Activated CD4-positive, alpha-beta memory T cell treated with anti-CD3 and anti-CD28 coated beads for 36 hours (primary cell): ENCODE measurements at regions of chr22 and their contacts with region 1.

Region 1: DNA sequence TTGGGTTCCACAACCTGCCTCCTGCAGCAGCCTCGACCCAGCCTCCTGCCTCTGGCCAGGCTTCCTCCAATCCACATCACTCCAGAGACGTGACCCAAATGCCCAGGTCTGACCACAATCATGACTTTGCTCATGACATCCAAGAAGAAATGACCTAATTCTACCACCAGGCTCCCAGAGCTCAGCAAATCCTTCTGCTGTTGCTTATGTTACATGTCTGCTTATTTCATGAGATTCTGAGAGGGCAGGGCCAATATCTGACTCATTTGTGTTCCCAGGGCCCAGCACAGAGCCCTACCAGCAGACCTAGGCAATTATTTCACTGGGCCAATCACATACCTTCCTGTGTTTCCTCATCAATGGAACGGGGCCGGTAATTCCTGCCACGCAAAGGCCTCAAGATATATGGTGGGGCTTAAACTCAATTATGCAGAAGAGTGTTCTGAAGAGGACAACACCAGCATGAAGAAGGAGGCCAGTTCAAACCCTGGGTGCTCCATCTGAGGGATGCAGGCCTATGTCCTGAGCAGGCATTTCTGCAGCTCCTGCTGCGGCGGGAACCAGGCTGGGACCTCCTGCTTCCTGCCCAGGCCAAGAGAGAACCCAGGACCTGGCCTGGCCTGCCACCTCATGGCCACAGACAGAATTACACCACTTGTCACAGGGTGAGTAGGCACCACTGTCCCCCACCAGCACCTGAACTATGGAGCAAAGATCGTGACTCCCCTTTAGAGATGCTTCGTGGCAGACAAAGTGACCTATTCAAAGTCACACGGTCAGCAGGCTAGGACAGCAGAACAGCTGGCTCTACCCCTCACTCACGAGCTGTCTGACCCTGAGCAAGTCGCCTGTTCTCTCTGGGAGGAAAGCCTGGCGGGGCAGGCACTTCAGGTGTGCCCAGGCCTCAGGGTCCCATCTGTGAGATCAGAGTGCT is 5.9 kb downstream of the CENPM start:
- DNase-seq: peak; percentile 91
- H3K4me3 Mint-ChIP-seq: peak overlapping the region; percentile 80
- H3K27ac Mint-ChIP-seq: peak overlapping the region; percentile 99
- H3K4me1 Mint-ChIP-seq: peaks cover 67% of the 10 kb centered on the region
- H3K27me3 Mint-ChIP-seq: no peaks in the 10 kb centered on the region

Region 2: DNA sequence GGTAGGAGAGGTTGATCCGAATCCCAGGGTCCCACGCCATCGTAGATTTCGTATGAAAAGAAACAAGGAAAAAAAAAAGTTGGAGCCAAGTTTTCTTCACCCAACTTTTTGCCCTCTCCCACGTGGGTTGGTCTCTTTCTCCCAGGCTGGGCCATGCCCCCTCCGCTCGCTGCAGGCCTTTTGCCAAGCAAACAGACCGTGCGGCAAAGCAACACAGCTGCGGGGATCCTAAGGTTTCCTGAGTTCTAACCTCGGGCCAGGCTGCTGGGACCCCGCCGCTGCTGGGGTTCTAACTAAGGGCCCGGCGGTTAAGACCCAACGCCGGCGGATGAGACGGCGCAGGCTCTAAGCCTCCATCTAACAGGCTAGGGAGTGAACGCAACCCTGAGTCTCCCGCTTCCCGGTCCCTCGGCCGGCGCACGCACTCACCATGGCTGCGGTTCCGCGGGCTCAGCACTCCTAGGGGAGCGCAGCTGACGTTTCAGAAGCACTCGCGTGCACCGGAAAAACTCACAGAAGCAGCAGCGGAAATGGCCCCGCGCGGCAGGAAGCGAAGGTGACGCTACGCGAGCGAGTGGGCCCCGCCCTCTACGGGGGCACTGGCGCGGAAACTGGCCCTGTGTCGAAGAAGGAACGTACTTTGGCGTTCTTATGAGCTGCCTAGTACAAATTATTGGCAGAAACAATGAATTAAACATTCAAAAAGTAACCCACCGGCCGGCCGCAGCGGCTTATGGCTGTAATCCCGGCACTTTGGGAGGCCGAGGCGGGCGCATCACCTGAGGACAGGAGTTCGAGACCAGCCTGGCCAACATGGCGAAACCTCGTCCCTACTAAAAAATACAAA is 252.5 kb before region 1 on chr22 and contains the start of gene SNU13:
- CTCF ChIA-PET with region 1: no interaction called
- POLR2A ChIA-PET with region 1: interaction called, 15 read pairs
- intact Hi-C with region 1: no loop called
- DNase-seq: peak; percentile 96
- H3K4me3 Mint-ChIP-seq: peak within 1 kb of the TSS; percentile 99
- H3K27ac Mint-ChIP-seq: peak within 1 kb of the TSS; percentile 97
- H3K4me1 Mint-ChIP-seq: peaks cover 34% of the 10 kb centered on the region
- H3K27me3 Mint-ChIP-seq: no peaks in the 10 kb centered on the region
- total RNA-seq, gene SNU13: 236 to 242 TPM

Region 3: DNA sequence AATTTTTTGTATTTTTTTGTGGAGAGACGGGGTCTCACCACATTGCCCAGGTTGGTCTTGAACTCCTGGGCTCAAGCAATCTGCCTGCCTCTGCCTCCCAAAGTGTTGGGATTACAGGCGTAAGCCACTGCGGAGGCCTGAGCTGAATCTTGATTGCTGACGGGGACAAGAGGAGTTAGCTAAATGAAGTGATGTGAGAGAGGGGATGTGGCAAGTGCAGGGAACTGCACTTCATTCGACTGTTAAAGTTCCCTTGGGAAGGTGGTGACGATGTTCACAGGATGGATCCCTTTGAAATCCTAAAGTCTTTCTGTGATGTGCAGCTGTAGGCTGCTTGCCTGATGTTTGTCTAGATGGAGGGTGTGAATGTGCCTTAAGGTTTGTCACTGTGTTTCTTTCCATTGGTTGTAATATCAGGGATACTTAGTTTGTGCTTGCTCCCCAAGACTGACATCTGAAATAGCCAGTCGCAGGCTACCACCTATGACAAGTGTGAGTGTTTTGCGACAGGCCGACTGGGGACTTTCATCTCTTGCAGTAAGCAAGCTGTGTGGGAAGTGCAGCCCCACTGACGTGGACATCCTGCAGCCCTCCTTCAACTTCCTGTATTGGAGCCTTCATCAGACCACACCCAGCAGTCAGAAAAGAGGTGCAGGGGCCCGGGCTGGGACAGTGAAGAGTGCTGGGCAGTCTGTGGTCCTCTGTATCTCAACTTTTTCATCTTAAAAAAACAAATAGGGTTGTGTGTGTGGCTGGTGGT is 160.2 kb before region 1 on chr22:
- CTCF ChIA-PET with region 1: interaction called, 16 read pairs
- POLR2A ChIA-PET with region 1: interaction called, 15 read pairs
- intact Hi-C with region 1: loop called (anchors 1 kb)
- DNase-seq: peak; percentile 96
- H3K4me3 Mint-ChIP-seq: peak overlapping the region; percentile 84
- H3K27ac Mint-ChIP-seq: peak overlapping the region; percentile 92
- H3K4me1 Mint-ChIP-seq: peaks cover 43% of the 10 kb centered on the region
- H3K27me3 Mint-ChIP-seq: no peaks in the 10 kb centered on the region

Region 4: DNA sequence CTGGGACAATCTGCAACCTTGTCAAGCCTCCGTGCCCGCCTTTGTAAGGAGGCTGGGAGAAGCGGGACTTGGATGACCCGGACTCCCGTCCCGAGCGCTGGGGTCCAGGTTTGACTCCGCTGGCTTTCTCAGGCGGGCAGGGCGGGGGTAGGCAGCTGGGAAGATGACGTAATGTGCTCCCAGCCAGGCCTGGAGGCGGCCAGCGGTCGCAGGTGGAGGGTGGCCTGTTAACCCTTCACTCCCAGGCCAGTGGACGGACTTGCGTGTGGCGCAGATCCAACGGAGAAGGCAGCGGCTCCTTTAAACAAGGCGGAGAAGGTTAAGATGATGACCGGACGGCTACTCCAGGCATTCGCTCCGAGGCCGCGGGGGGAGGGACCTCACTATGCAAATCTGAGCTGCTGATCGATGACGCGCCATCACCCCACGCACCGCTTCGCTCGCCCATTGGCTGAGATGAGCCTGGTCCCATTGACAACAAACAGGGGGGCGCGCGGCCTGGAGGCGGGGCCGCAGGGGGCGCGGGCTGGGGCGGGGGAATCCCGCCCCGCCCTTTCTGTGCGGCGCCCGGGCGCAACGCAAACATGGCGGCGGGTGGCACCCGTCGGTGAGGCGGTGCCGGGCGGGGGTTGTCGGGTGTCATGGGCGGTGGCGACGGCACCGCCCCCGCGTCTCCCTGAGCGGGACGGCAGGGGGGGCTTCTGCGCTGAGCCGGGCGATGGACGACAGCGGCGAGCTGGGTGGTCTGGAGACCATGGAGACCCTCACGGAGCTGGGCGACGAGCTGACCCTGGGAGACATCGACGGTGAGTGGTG is 108.3 kb before region 1 on chr22 and contains the start of gene SREBF2:
- CTCF ChIA-PET with region 1: interaction called, 21 read pairs
- POLR2A ChIA-PET with region 1: interaction called, 26 read pairs
- intact Hi-C with region 1: loop called (anchors 1 kb)
- DNase-seq: peak; percentile 100
- H3K4me3 Mint-ChIP-seq: peak within 1 kb of the TSS; percentile 98
- H3K27ac Mint-ChIP-seq: peak within 1 kb of the TSS; percentile 99
- H3K4me1 Mint-ChIP-seq: peaks cover 44% of the 10 kb centered on the region
- H3K27me3 Mint-ChIP-seq: no peaks in the 10 kb centered on the region
- total RNA-seq, gene SREBF2: 131 to 137 TPM

Region 5: GRCh38 chr22:41910050-41911000 is 30.8 kb before region 1 on chr22:
- CTCF ChIA-PET with region 1: interaction called, 3 read pairs
- POLR2A ChIA-PET with region 1: interaction called, 5 read pairs
- intact Hi-C with region 1: loop called (anchors 1 kb)
- DNase-seq: peak; percentile 40
- H3K4me3 Mint-ChIP-seq: no peak overlapping the region
- H3K27ac Mint-ChIP-seq: no peak overlapping the region
- H3K4me1 Mint-ChIP-seq: peaks cover 33% of the 10 kb centered on the region
- H3K27me3 Mint-ChIP-seq: peaks cover 30% of the 10 kb centered on the region

Region 6: DNA sequence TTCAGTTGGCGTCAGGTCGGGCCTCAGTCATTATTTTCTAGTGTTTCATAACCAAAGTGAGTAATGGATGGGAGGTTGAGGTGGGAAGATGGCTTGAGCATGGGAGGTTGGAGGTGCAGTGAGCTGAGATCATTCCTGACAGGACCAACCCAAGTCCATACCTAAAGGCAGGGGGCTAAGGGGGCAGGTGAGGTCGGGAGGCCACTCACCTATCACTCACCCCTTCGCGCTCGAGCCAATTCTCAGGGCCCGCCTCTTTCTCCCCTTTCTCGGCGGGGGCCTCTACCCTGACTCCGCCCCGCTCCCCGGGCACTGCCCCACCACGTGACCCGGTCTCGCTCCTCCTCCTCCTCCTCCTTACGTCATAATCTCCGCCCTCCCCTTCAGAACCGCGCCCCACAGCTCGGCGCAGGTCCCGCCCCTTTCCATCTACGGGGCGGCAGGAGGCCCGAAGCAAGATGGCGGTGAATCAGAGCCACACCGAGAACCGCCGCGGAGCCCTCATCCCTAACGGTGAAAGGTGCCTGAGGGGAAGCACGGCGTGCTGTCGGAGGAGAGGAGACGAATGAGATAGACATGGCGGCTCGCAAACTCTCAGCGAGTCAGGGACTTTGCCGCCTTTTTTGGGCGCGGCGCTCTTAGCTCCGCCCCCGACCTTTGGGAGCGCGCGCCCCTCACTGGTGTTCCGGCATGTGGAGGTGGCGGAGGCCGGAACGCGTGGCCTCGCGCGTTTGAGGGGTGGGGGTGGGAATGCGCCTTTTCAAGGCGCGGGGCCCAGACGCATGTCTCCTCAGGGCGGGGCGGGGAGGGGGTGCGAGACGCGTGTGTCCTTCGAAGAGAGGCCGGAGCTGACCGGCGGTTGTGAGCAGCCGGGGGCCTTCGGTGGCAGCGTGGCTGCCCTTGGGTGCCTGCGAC is 57.5 kb after region 1 on chr22 and contains the start of gene WBP2NL:
- CTCF ChIA-PET with region 1: no interaction called
- POLR2A ChIA-PET with region 1: no interaction called
- intact Hi-C with region 1: loop called (anchors 5 kb)
- DNase-seq: peak; percentile 94
- H3K4me3 Mint-ChIP-seq: peak within 1 kb of the TSS; percentile 87
- H3K27ac Mint-ChIP-seq: peak within 1 kb of the TSS; percentile 81
- H3K4me1 Mint-ChIP-seq: peaks cover 18% of the 10 kb centered on the region
- H3K27me3 Mint-ChIP-seq: no peaks in the 10 kb centered on the region
- total RNA-seq, gene WBP2NL: 0.82 to 1.5 TPM